HCT116 (cell line): ENCODE measurements at regions of chr19 and their contacts with region 1.

Region 1: GRCh38 chr19:17932485-17933338 is at the start of gene CCDC124:
- DNase-seq: peak; percentile 88
- ATAC-seq: peak; percentile 87
- H3K4me3 ChIP-seq: peak within 1 kb of the TSS; percentile 87 to 98
- H3K27ac ChIP-seq: peak within 1 kb of the TSS; percentile 86
- H3K4me1 ChIP-seq: peaks cover 15 to 22% of the 10 kb centered on the region in 2 experiments
- H3K27me3 ChIP-seq: no peaks in the 10 kb centered on the region
- CTCF ChIP-seq: peak; percentile 94 to 97 (median 97)
- POLR2A ChIP-seq: peak; percentile 41
- RAD21 ChIP-seq: peak; percentile 100
- total RNA-seq, gene CCDC124: 177 TPM

Region 2: GRCh38 chr19:17522988-17523872 is 409.5 kb before region 1 on chr19:
- CTCF ChIA-PET with region 1: no interaction called
- POLR2A ChIA-PET with region 1: no interaction called
- RAD21 ChIA-PET with region 1: no interaction called
- intact Hi-C with region 1: no loop called
- DNase-seq: no peak
- ATAC-seq: no peak
- H3K4me3 ChIP-seq: no peak overlapping the region
- H3K27ac ChIP-seq: no peak overlapping the region
- H3K4me1 ChIP-seq: no peaks in the 10 kb centered on the region
- H3K27me3 ChIP-seq: no peaks in the 10 kb centered on the region
- CTCF ChIP-seq: no peak
- POLR2A ChIP-seq: no peak
- RAD21 ChIP-seq: no peak

Region 3: GRCh38 chr19:17865364-17866311 is 67.1 kb before region 1 on chr19:
- CTCF ChIA-PET with region 1: interaction called, 39 read pairs
- POLR2A ChIA-PET with region 1: interaction called, 61 read pairs
- RAD21 ChIA-PET with region 1: interaction called, 14 to 20 read pairs
- intact Hi-C with region 1: loop called (anchors 1 kb)
- DNase-seq: peak; percentile 57
- ATAC-seq: peak; percentile 64
- H3K4me3 ChIP-seq: no peak overlapping the region
- H3K27ac ChIP-seq: peak overlapping the region; percentile 84
- H3K4me1 ChIP-seq: peaks cover 36 to 63% of the 10 kb centered on the region in 2 experiments
- H3K27me3 ChIP-seq: no peaks in the 10 kb centered on the region
- CTCF ChIP-seq: no peak
- POLR2A ChIP-seq: peak; percentile 35
- RAD21 ChIP-seq: no peak

Region 4: DNA sequence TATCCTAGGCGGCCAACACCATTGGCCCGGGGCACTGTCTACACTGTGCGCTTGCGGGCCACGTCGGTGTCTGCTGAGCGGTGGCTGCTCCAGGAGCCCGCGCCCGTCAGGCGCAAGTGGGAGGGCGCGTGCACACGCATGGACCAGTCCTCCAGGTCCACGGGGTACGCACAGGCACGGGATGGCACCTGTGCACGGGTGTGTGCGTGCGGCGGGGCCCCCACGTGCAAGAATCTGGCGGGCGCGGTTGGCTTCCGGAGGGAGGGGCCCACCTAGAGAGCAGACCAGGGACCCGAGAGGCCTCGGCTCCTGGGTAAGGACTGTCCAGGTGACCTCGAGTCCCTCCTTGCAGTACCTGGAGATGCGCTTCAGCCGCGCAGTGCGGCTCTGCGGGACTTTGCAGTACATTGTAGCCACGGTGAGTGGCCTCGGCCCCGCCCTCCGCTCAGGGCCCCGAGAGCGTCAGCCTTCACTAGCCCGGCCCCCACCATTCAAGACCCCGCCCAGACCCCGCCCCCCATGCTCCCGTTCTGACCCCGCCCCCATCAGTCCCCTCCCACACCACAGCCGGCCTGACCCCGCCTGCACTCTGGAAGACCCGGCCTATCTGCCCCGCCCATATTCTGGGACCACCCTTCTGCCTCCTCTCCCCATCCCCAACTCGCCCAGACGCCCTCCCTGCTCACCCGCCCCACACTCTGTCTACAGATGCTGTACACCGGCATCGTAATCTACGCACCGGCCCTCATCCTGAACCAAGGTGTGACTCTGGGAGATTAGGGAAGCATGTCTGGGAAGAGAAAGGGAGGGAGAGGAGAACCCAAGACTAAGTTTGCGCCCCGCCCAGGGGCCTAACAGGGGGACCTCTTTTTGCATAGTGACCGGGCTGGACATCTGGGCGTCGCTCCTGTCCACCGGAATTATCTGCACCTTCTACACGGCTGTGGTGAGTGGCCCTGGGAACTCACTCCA is 58.6 kb before region 1 on chr19:
- CTCF ChIA-PET with region 1: interaction called, 39 read pairs
- POLR2A ChIA-PET with region 1: interaction called, 9 read pairs
- RAD21 ChIA-PET with region 1: interaction called, 14 to 20 read pairs
- intact Hi-C with region 1: loop called (anchors 1 kb)
- DNase-seq: peak; percentile 48
- ATAC-seq: peak; percentile 89
- H3K4me3 ChIP-seq: peak overlapping the region; percentile 22 to 57
- H3K27ac ChIP-seq: peak overlapping the region; percentile 75
- H3K4me1 ChIP-seq: peaks cover 10 to 18% of the 10 kb centered on the region in 2 experiments
- H3K27me3 ChIP-seq: no peaks in the 10 kb centered on the region
- CTCF ChIP-seq: no peak
- POLR2A ChIP-seq: no peak
- RAD21 ChIP-seq: no peak

Region 5: DNA sequence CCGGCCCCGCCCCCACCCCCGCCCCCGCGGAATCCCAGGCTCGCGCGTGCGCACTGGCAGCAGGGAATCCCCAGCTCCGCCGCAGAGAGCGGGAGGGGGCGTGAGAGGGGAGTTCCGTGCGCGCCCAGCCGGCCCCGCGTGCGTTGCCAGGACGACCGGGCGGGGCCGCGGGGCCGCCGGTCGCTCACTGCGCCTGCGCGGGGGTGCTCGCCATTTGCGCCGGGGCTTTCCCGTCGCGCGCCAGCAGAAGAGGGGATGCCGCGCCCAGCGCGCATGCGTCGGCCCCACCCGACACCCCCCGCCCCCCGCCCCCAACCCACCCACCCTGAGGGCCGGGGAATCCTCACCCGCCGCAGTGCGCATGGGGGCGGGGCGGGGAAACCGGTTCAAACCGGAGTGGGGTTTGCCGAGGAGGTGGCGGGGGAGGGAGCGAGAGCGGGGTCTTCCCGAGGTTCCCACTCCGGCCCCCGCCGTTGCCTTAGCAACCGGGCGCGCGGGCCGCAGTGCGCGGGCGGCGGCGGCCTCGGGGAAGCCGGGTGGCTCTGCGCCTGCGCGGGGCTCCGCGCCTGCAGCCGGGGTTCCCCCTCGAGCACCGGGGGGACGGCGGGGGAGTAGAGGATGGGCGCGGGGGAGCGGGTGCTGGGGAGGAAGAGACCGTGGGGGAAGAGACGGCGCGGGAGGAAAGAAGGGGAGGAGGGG is 15.3 kb after region 1 on chr19:
- CTCF ChIA-PET with region 1: interaction called, 16 read pairs
- POLR2A ChIA-PET with region 1: interaction called, 5 read pairs
- RAD21 ChIA-PET with region 1: no interaction called
- intact Hi-C with region 1: no loop called
- DNase-seq: peak; percentile 81
- ATAC-seq: peak; percentile 66
- H3K4me3 ChIP-seq: peak overlapping the region; percentile 44 to 62
- H3K27ac ChIP-seq: peak overlapping the region; percentile 47; the same call in 1 of the 2 replicates
- H3K4me1 ChIP-seq: peaks cover 34 to 67% of the 10 kb centered on the region in 2 experiments
- H3K27me3 ChIP-seq: no peaks in the 10 kb centered on the region
- CTCF ChIP-seq: no peak
- POLR2A ChIP-seq: no peak
- RAD21 ChIP-seq: no peak

Region 6: DNA sequence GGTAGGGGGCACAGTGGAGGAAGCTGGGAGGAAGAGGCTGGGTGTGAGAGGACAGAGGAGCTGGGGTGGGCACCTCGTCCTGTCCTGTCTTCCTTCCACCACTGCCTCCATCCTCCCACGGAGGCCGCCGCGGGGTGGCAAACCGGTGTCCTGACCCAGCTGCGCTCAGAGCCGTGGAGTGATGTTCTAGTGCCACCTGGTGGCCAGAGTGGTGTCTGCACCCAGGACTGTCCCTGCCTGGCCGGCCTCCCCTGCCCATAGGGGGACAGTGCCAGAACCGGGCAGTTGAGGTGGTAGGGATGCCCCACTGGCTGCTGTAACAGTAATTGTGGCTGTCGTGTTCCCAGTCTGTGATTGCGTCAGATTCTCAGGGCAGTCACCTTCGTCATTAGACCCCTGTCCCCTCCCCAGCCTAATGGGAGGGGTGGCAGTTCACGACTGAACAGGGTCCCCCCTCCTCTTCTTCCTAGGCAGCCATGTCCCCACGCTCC is 64.2 kb after region 1 on chr19:
- CTCF ChIA-PET with region 1: interaction called, 127 read pairs
- POLR2A ChIA-PET with region 1: interaction called, 4 read pairs
- RAD21 ChIA-PET with region 1: interaction called, 3 to 16 read pairs
- intact Hi-C with region 1: no loop called
- DNase-seq: peak; percentile 48
- ATAC-seq: peak; percentile 67
- H3K4me3 ChIP-seq: peak overlapping the region; percentile 61 to 67
- H3K27ac ChIP-seq: peak overlapping the region; percentile 94
- H3K4me1 ChIP-seq: peaks cover 28 to 50% of the 10 kb centered on the region in 2 experiments
- H3K27me3 ChIP-seq: no peaks in the 10 kb centered on the region
- CTCF ChIP-seq: peak; percentile 93 to 98 (median 93)
- POLR2A ChIP-seq: no peak
- RAD21 ChIP-seq: peak; percentile 99